ENCODE measurements at regions of chr1 and their contacts with region 1.

Region 1: GRCh38 chr1:204814181-204814884 is 56.3 kb upstream of the NFASC start:
- DNase-seq: no peak
- H3K4me3 ChIP-seq: no peak overlapping the region
- H3K27ac ChIP-seq: no peak overlapping the region
- H3K4me1 ChIP-seq: peaks cover 0 to 12% of the 10 kb centered on the region in 2 donors
- H3K27me3 ChIP-seq: no peaks in the 10 kb centered on the region
- CTCF ChIP-seq: no peak
- POLR2A ChIP-seq: no peak

Region 2: GRCh38 chr1:204706838-204707509 is 107.4 kb before region 1 on chr1:
- intact Hi-C with region 1: no loop called
- DNase-seq: no peak
- H3K4me3 ChIP-seq: no peak overlapping the region
- H3K27ac ChIP-seq: no peak overlapping the region
- H3K4me1 ChIP-seq: no peaks in the 10 kb centered on the region
- H3K27me3 ChIP-seq: peaks cover 13% of the 10 kb centered on the region
- CTCF ChIP-seq: no peak
- POLR2A ChIP-seq: no peak

Region 3: DNA sequence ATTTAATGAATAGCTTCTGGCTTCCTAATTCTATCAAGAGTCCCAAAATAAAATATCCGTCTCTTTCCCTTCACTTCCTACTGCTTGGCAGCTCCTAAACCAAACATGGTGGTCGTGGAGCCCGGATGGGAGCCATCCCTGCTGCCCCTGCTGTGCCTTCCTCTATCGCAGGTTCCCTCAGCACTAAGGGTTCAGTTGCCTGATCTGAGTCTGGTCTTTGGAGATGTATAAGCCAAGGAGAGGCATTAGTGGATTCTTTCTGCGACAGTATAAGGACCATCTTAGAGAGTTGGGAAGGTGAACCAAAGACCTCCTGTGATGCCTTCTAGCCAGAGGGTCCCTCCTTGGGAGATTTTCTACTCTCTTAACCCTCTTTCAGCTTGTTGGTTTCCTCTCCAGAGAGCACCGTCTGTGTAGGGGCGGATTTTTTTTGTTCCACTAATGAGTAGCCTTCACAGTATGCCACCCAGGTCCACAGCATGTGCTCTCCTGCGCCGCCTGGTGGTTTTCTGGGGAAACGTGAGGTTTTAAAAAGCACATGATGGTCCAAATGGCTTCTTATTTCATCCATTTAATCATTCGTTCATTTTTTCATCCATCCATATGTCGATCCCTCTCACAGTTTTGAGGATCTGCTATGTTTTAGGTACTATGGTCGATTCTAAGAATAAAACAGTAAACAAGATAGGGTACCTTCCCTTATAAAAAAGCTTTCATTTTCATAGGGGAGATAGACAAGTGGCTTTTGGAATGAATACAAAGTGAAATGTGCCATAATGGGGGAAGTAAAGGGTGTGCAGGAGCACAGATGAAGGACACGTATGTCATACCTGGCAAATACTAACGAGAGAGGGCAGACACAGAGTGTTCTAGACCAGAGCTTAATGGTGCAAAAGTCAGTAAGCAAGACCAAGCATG is 127.3 kb after region 1 on chr1:
- intact Hi-C with region 1: loop called (anchors 2 to 5 kb)
- DNase-seq: peak; percentile 55 to 91 (median 73)
- H3K4me3 ChIP-seq: no peak overlapping the region
- H3K27ac ChIP-seq: no peak overlapping the region
- H3K4me1 ChIP-seq: peaks cover 0 to 6% of the 10 kb centered on the region in 2 donors
- H3K27me3 ChIP-seq: no peaks in the 10 kb centered on the region
- CTCF ChIP-seq: peak; percentile 84 to 92 (median 89)
- POLR2A ChIP-seq: no peak